ENCODE measurements at regions of chr2 and their contacts with region 1.

Region 1: GRCh38 chr2:189337656-189338055 is 103.6 kb upstream of the WDR75 start:
- DNase-seq: no peak
- H3K4me3 ChIP-seq: no peak overlapping the region
- H3K27ac ChIP-seq: peak overlapping the region in 1 of 2 donors; percentile 62
- H3K4me1 ChIP-seq: peaks cover 6% of the 10 kb centered on the region
- H3K27me3 ChIP-seq: no peaks in the 10 kb centered on the region
- CTCF ChIP-seq: no peak
- EP300 ChIP-seq: no peak
- POLR2A ChIP-seq: no peak

Region 2: GRCh38 chr2:189305291-189305943 is 32.2 kb before region 1 on chr2:
- intact Hi-C with region 1: loop called in 1 of 4 experiments (anchors 2 kb)
- DNase-seq: no peak
- H3K4me3 ChIP-seq: no peak overlapping the region
- H3K27ac ChIP-seq: no peak overlapping the region
- H3K4me1 ChIP-seq: no peaks in the 10 kb centered on the region
- H3K27me3 ChIP-seq: no peaks in the 10 kb centered on the region
- CTCF ChIP-seq: no peak
- EP300 ChIP-seq: no peak
- POLR2A ChIP-seq: no peak

Region 3: GRCh38 chr2:189421644-189422043 is 84.0 kb after region 1 on chr2:
- intact Hi-C with region 1: no loop called
- DNase-seq: no peak
- H3K4me3 ChIP-seq: no peak overlapping the region
- H3K27ac ChIP-seq: no peak overlapping the region
- H3K4me1 ChIP-seq: no peaks in the 10 kb centered on the region
- H3K27me3 ChIP-seq: no peaks in the 10 kb centered on the region
- CTCF ChIP-seq: no peak
- EP300 ChIP-seq: no peak
- POLR2A ChIP-seq: no peak

Region 4: GRCh38 chr2:189580658-189581353 is 243.2 kb after region 1 on chr2 and contains the start of gene SLC40A1:
- intact Hi-C with region 1: no loop called
- DNase-seq: peak; percentile 88 to 91 (median 88)
- H3K4me3 ChIP-seq: peak within 1 kb of the TSS; percentile 68
- H3K27ac ChIP-seq: peak within 1 kb of the TSS; percentile 90 to 92
- H3K4me1 ChIP-seq: peaks cover 10% of the 10 kb centered on the region
- H3K27me3 ChIP-seq: no peaks in the 10 kb centered on the region
- CTCF ChIP-seq: peak in 2 of 3 donors; percentile 26 to 40
- EP300 ChIP-seq: no peak
- POLR2A ChIP-seq: peak; percentile 97
- total RNA-seq, gene SLC40A1: 243 to 515 (median 365) TPM

Region 5: DNA sequence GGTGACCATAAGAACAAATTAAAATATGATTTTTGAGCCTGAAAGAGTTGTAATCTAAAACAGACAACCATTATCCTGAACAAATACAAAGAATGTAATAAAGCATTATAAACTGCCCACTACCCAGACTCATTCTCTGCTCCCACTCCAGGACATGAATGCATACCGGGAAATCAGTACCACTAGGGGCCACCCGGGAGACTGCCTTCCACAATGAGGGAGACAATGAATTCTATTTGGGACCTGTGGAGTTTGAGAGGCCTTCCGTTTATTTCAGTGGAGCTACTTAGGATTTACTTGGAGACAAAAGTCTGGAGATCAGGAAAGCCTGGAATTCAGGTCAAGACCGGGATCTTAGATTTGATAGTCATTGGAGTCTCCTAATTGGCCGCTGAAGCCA is 1361.2 kb after region 1 on chr2:
- intact Hi-C with region 1: no loop called
- DNase-seq: no peak
- H3K4me3 ChIP-seq: no peak overlapping the region
- H3K27ac ChIP-seq: no peak overlapping the region
- H3K4me1 ChIP-seq: no peaks in the 10 kb centered on the region
- H3K27me3 ChIP-seq: no peaks in the 10 kb centered on the region
- CTCF ChIP-seq: no peak
- EP300 ChIP-seq: no peak
- POLR2A ChIP-seq: no peak